Heart right ventricle (tissue), 16 donors: ENCODE measurements at regions of chr11 and their contacts with region 1.

Region 1: DNA sequence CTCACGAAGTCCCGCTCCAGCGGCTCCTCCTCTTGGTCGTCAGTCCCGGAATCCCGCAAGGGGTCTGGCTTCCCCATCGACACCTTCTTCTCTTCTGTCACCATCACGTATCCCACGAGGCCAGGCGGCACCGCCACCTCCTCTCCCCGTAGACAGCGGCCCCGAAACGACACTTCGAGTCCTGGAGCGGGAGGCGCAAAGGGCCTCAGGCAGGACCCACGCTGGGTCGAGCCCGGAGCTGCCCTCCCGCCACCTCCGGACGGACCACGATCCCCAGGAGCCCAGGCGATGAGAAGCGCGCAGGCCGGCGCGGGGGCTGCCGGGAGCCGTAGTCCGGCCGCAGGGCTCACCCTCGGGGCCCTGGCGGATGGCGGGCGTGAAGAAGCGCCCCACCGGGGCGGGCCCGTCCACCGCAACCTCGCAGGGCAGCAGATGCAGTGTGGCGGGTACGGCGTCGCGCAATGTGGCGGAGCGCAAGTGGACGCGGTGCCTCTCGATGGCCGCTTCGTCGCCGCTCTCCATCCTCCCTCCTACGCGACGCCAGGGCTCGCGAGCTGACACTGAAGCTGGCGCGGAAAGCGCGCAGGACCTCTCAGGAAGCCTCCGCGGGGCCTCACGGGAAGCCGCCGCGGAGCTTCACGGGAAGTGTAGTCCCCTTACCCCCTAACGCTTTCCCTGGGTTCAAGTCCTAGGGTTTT is at the start of gene RNASEH2C:
- DNase-seq: peak; percentile 83 to 85
- ATAC-seq: peak; percentile 96 to 98 (median 96)
- H3K4me3 ChIP-seq: peak within 1 kb of the TSS; percentile 54 to 93 (median 70)
- H3K27ac ChIP-seq: peak within 1 kb of the TSS; percentile 39 to 95 (median 90)
- H3K4me1 ChIP-seq: peaks cover 10 to 23% (median 19%) of the 10 kb centered on the region in 9 donors
- H3K27me3 ChIP-seq: no peaks in the 10 kb centered on the region
- CTCF ChIP-seq: peak in 1 of 9 donors; percentile 10
- total RNA-seq, gene RNASEH2C: 34.1 to 75.6 (median 43.5) TPM

Region 2: GRCh38 chr11:65016697-65017096 is 703.7 kb before region 1 on chr11:
- intact Hi-C with region 1: no loop called
- DNase-seq: no peak
- ATAC-seq: no peak
- H3K4me3 ChIP-seq: no peak overlapping the region
- H3K27ac ChIP-seq: no peak overlapping the region
- H3K4me1 ChIP-seq: peaks cover 11 to 34% (median 20%) of the 10 kb centered on the region in 9 donors
- H3K27me3 ChIP-seq: no peaks in the 10 kb centered on the region
- CTCF ChIP-seq: no peak

Region 3: DNA sequence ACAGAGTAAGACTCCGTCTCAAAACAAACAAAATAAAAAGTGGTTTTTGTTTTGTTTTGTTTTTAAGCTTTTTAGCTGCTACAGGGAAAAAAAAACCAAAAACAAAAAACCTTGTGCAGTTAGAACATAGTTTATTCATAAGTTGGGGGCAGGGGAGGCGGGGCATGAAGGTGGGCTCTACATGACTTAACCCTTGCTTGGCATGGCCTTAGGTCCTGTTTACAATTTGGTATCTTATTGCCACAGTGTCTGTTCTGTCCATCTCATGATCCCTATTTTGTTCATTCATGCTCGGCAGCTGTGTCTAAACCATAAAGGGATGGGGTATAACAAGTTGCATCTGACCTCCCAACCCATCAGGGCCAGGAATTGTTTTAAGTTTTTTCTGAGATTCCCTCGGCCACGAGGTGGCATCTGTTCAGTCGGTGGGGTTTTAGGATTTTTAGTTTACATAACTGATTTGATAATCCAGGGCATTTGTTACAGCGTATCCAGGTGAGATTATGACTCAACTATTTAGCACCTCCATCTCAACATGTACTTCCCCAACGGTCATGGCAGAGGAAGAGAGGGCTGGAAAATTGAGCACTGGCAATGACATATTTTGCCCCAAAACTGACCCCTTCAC is 53.5 kb after region 1 on chr11:
- intact Hi-C with region 1: loop called in 3 of 10 experiments (anchors 5 to 10 kb)
- DNase-seq: no peak
- ATAC-seq: no peak
- H3K4me3 ChIP-seq: no peak overlapping the region
- H3K27ac ChIP-seq: peak overlapping the region in 1 of 10 donors; percentile 96
- H3K4me1 ChIP-seq: peaks cover 0 to 64% (median under 1%) of the 10 kb centered on the region in 9 donors
- H3K27me3 ChIP-seq: no peaks in the 10 kb centered on the region
- CTCF ChIP-seq: no peak

Region 4: DNA sequence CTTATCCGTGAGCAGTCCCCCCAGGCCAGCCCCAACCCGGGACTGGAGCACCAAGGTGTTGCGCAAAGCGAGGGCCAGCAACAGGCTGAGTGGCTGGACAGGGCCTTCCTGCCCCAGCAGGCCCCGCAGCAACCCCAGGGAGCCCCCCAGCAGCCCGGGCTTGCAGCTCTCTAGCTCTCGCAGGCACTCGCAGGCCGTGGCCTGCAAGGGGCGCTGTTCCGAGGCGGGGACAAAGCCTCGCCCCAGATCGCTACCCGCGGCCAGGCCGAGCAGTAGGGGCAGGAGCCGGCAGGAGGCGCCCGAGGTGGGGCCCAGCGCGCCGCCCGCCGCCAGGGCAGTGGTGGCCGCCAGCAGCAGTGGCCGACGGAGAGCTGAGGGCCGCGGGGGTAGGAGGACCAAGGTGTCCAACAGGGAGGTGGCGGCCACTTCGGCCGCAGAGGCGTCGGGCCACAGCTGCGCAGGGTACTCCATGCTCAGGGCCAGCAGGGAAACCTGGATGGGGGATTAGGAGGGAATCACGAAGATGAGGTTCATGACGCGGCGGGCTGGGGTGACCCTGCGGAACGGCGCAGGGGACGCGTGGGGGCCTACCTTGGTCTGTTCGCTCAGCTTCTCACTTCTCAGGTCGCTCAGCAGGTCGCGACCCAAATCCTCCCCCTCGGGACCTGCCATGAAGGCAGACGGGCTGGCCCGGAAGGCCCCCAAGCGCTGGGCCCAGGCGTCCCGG is 59.6 kb after region 1 on chr11:
- intact Hi-C with region 1: loop called in 2 of 10 experiments (anchors 10 kb)
- DNase-seq: peak; percentile 69 to 82
- ATAC-seq: peak; percentile 81 to 92 (median 90)
- H3K4me3 ChIP-seq: peak overlapping the region; percentile 68 to 98 (median 92)
- H3K27ac ChIP-seq: peak overlapping the region in 9 of 10 donors; percentile 70 to 96 (median 82)
- H3K4me1 ChIP-seq: peaks cover 9 to 53% (median 16%) of the 10 kb centered on the region in 9 donors
- H3K27me3 ChIP-seq: peaks cover 0 to 11% (median 5%) of the 10 kb centered on the region in 7 donors
- CTCF ChIP-seq: peak; percentile 83 to 99 (median 95)

Region 5: DNA sequence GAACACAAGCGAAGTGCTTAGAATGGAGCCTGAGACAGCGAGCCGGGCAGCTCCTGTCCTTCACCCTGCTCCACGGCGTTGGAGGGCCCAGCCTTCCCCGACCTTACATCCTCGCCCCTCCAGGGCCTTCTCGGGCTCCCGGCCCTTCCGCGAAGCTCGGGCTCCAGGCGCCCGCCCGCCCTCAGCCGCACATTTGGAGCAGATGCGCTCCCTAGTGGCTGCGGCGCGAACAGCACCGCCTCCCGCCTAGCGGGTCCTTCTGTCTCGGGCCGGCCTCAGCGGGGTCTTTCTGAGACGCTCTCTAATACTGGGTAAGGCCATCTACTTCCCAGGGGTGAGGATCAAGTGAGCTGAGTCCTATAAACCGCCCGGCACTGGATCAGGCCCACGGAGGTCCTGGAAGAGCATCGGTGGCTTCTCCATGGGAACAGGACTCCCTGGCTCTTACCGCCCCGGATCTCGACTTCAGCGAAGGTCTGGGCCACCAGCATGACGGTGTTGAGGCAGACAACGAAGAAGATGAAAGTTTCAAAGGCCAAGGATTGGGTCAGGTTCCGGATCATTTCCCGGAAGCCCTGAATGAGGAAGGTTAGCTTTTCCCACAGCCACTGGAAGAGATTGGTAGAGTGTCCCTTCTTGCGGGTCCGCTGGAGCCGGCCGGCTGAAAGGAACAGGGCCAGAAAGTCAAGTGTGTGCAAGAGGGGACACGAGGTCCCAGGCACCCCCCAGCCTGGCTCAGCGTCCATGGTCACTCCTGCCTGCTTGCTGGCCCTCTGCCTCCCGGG is 302.2 kb after region 1 on chr11:
- intact Hi-C with region 1: no loop called
- DNase-seq: peak; percentile 65 to 81
- ATAC-seq: peak; percentile 62 to 87 (median 85)
- H3K4me3 ChIP-seq: peak overlapping the region in 7 of 10 donors; percentile 4 to 29 (median 17)
- H3K27ac ChIP-seq: no peak overlapping the region
- H3K4me1 ChIP-seq: peaks cover 0 to 26% (median 8%) of the 10 kb centered on the region in 9 donors
- H3K27me3 ChIP-seq: peaks cover 0 to 9% (median 7%) of the 10 kb centered on the region in 7 donors
- CTCF ChIP-seq: peak; percentile 89 to 98 (median 95)